ENCODE measurements at regions of chr11 and their contacts with region 1.

Region 1: DNA sequence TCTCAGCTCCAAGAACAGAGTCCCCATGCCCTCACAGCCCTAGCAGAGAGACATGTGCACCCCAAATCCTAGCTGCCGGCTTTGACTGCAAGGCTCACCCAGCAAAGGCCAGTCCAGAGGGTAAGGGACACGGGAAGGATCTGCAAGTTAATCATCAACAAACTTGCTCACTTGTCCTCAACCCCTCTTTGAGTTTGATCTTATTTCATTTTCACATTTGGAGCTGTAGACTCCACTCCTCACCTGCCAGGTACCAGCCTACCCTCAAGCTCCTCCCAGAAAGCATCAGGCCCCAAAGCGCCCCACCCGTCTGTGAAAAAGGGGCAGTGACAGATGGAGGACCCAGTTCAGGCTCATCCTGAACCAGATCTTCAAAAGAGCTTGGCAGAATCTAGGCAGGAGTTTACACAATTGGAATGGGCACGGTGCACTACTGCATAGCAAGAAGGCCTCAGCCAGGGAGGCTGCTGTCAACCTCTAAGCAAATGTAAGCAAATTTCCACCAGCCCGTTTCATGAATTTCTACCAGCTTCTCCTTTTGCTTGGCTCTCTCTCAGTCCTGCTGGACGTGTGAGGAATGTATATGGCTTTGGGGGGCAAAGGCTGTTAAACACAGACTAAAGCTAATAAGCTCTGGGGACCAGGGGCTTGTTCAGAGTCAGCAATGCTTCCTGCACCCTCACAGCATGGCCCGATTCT is 5.5 kb downstream of the EHD1 start:
- DNase-seq: no peak
- H3K4me3 ChIP-seq: no peak overlapping the region
- H3K27ac ChIP-seq: no peak overlapping the region
- H3K4me1 ChIP-seq: peaks cover 64% of the 10 kb centered on the region
- H3K27me3 ChIP-seq: no peaks in the 10 kb centered on the region
- CTCF ChIP-seq: no peak

Region 2: GRCh38 chr11:64284048-64284961 is 588.6 kb before region 1 on chr11 and contains the start of gene BAD:
- CTCF ChIA-PET with region 1: interaction called, 11 read pairs
- POLR2A ChIA-PET with region 1: no interaction called
- intact Hi-C with region 1: no loop called
- DNase-seq: peak; percentile 87 to 95
- H3K4me3 ChIP-seq: peak within 1 kb of the TSS; percentile 67
- H3K27ac ChIP-seq: peak within 1 kb of the TSS; percentile 54
- H3K4me1 ChIP-seq: peaks cover 22% of the 10 kb centered on the region
- H3K27me3 ChIP-seq: no peaks in the 10 kb centered on the region
- CTCF ChIP-seq: no peak
- total RNA-seq, gene BAD: 94.3 and 94.4 TPM in 2 replicates

Region 3: GRCh38 chr11:64924102-64924851 is 51.3 kb after region 1 on chr11 and contains the start of gene PPP2R5B:
- CTCF ChIA-PET with region 1: no interaction called
- POLR2A ChIA-PET with region 1: no interaction called
- intact Hi-C with region 1: no loop called
- DNase-seq: peak; percentile 91
- H3K4me3 ChIP-seq: peak within 1 kb of the TSS; percentile 66
- H3K27ac ChIP-seq: peak within 1 kb of the TSS; percentile 58
- H3K4me1 ChIP-seq: peaks cover 11% of the 10 kb centered on the region
- H3K27me3 ChIP-seq: no peaks in the 10 kb centered on the region
- CTCF ChIP-seq: no peak
- total RNA-seq, gene PPP2R5B: 13.7 and 13.9 TPM in 2 replicates

Region 4: DNA sequence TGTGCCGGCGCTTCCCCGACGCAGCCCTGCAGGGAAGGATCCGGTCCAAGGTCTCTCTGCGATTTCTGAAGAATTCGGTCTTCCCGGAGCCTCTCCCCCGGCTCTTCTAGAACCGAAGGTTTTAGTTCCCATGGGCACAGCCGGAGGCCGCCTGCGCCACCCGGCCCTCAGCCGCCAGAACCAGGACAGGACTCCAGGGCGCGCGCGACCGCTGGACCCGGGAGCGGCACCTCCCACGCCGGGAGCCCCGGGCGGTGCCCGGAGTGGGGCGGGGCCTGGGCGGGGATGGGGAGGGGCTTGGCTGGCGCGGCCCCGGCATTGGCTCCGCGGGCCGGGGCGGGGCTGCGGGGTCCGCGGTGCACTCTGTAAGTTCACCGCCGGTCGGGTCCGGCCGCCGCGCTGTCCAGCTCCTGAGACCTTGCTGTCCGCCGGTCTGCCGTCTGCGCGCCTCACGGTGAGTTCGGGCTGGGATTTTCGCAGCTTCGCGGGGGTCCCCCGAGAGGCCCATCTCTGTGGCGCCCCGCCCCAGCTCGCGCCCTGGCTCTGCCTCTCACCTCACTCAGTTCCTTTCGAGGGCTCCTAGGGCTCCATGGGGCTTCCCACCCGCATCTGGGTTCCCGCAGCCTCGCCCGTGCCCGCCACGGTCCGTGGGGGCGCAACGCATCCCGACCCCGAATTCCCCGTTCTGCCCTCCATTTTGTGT is 441.7 kb after region 1 on chr11 and contains the start of gene CDC42EP2:
- CTCF ChIA-PET with region 1: no interaction called
- POLR2A ChIA-PET with region 1: no interaction called
- intact Hi-C with region 1: no loop called
- DNase-seq: peak; percentile 70 to 94
- H3K4me3 ChIP-seq: peak within 1 kb of the TSS; percentile 90
- H3K27ac ChIP-seq: peak within 1 kb of the TSS; percentile 54
- H3K4me1 ChIP-seq: peaks cover 66% of the 10 kb centered on the region
- H3K27me3 ChIP-seq: no peaks in the 10 kb centered on the region
- CTCF ChIP-seq: no peak
- total RNA-seq, gene CDC42EP2: 17.8 and 20.8 TPM in 2 replicates

Measured in PC-9 (cell line).